PC-3 (cell line): ENCODE measurements at regions of chr19 and their contacts with region 1.

Region 1: GRCh38 chr19:5622463-5623396 is at the starts of genes SAFB and SAFB2:
- DNase-seq: peak; percentile 100
- ATAC-seq: peak; percentile 90
- H3K4me3 ChIP-seq: peak within 1 kb of the TSS; percentile 90
- H3K27ac ChIP-seq: peak within 1 kb of the TSS; percentile 67
- H3K4me1 ChIP-seq: peaks cover 36% of the 10 kb centered on the region
- H3K27me3 ChIP-seq: no peaks in the 10 kb centered on the region
- CTCF ChIP-seq: no peak
- total RNA-seq, gene SAFB: 94.9 and 164 TPM in 2 replicates
- total RNA-seq, gene SAFB2: 77.5 and 101 TPM in 2 replicates

Region 2: DNA sequence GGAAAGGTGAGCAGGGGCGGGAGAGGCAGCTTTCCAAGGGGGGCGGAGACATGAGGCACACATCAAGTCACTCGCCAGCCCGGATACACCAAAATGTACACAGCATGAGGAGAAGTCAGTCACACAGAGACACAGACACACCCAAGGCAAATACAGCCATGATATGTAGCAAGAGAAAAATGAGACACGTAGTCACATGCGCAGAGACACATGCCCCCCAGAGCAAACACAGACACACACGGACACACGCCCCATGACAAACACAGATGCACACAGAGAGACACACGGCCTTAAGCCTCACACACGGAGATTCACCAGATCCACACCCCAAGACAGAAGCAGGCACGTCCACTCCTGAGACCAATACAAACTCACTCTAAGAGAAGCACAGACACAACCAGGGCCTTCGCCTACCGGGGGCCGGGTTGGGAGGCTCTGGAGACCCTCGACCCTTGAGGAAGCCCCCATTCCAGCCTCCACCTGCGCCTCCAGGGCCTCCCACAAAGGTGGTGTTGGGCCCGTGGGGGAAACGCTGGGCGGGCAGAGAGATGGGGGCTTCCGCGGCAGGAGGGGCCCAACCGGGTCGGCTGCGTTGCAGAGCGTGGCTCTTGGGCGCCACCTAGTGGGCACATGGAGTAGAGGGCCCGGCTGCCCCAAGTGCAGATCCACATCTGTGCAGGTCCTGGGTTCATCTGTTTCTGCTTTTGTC is 44.8 kb before region 1 on chr19:
- CTCF ChIA-PET with region 1: no interaction called
- POLR2A ChIA-PET with region 1: no interaction called
- intact Hi-C with region 1: no loop called
- DNase-seq: peak; percentile 95
- ATAC-seq: peak; percentile 83
- H3K4me3 ChIP-seq: peak overlapping the region; percentile 67
- H3K27ac ChIP-seq: peak overlapping the region; percentile 83
- H3K4me1 ChIP-seq: peaks cover 5% of the 10 kb centered on the region; the same call in 1 of the 2 replicates
- H3K27me3 ChIP-seq: no peaks in the 10 kb centered on the region
- CTCF ChIP-seq: peak; percentile 99

Region 3: DNA sequence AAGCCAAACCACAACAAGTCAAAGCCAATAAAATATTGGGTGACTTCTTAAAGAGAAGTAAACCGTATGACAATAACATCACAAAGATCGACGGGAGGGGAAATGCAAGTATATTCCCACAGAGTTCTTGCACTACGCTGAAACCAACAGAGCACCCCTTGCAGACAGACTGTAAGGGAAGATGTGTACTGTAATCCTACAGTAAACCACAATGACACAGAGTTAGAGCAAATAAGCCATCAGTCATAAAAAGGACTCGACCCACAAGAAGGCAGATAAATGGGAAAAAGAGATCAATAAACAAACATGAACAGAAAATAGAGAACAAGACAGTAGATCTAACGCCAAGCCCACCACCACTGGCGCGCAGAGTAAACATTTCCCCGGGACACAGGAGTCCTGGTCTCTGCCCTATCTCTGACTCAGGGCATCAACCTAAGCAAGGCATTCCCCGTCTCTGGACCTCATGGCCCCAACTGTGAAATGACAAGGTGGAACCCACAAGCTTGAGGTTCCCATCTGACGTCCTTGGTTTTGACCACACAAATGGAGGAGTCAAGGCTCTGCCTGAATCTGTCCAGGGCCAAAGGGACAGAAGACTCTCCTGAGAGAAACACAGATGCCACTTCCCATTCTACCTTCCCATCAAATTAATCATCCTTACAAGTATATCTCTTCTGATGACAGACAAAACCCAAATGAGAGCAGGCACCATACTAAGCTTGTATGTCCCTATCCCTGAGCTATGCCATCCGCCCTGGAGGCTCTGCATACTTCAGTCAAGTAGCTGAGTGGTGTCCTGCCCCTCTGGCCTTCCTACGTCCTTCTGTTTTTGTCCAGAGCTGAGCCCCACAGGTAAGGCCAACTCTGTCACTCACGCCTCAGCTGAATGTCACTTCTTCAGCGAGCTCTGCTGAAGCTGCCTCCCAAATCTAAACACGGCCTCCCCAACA is 15.1 kb before region 1 on chr19:
- CTCF ChIA-PET with region 1: no interaction called
- POLR2A ChIA-PET with region 1: no interaction called
- intact Hi-C with region 1: loop called (anchors 1 kb)
- DNase-seq: peak; percentile 56
- ATAC-seq: peak; percentile 76
- H3K4me3 ChIP-seq: no peak overlapping the region
- H3K27ac ChIP-seq: peak overlapping the region; percentile 85
- H3K4me1 ChIP-seq: peaks cover 27% of the 10 kb centered on the region
- H3K27me3 ChIP-seq: no peaks in the 10 kb centered on the region
- CTCF ChIP-seq: no peak

Region 4: GRCh38 chr19:5665796-5666513 is 43.2 kb after region 1 on chr19:
- CTCF ChIA-PET with region 1: no interaction called
- POLR2A ChIA-PET with region 1: no interaction called
- intact Hi-C with region 1: no loop called
- DNase-seq: peak; percentile 58
- ATAC-seq: peak; percentile 76
- H3K4me3 ChIP-seq: no peak overlapping the region
- H3K27ac ChIP-seq: no peak overlapping the region
- H3K4me1 ChIP-seq: no peaks in the 10 kb centered on the region
- H3K27me3 ChIP-seq: no peaks in the 10 kb centered on the region
- CTCF ChIP-seq: peak; percentile 42; the same call in 1 of the 2 replicates

Region 5: DNA sequence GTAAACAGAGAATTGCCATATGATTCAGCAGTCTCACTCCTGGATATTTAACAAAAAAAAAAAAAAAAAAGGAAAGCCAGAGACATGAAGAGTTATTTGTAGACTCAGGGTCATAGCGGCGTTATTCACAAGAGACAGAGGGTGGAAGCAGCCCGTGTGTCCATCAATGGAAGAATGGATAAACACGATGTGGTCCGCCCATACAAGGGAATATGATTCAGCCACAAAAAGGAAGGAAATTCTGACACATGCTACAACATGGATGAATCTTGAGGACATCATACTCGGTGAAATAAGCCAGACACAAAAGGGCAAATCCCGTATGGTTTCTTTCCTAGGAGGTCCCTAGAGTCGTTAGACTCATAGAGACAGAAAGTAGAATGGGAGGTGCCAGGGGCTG is 527.6 kb after region 1 on chr19:
- CTCF ChIA-PET with region 1: no interaction called
- POLR2A ChIA-PET with region 1: no interaction called
- intact Hi-C with region 1: no loop called
- DNase-seq: no peak
- ATAC-seq: no peak
- H3K4me3 ChIP-seq: no peak overlapping the region
- H3K27ac ChIP-seq: no peak overlapping the region
- H3K4me1 ChIP-seq: no peaks in the 10 kb centered on the region
- H3K27me3 ChIP-seq: peaks cover 8% of the 10 kb centered on the region; the same call in 1 of the 2 replicates
- CTCF ChIP-seq: no peak